Caco-2 (cell line): ENCODE measurements at regions of chr11 and their contacts with region 1.

Region 1: GRCh38 chr11:35373284-35373933 is 45.9 kb downstream of the SLC1A2 start:
- DNase-seq: no peak
- H3K4me3 ChIP-seq: no peak overlapping the region
- H3K4me3 Mint-ChIP-seq: no peak overlapping the region
- H3K27ac Mint-ChIP-seq: no peak overlapping the region
- H3K4me1 ChIP-seq: no peaks in the 10 kb centered on the region
- H3K4me1 Mint-ChIP-seq: peaks cover 6% of the 10 kb centered on the region
- H3K27me3 ChIP-seq: no peaks in the 10 kb centered on the region
- H3K27me3 Mint-ChIP-seq: peaks cover 2% of the 10 kb centered on the region
- CTCF ChIP-seq: no peak

Region 2: DNA sequence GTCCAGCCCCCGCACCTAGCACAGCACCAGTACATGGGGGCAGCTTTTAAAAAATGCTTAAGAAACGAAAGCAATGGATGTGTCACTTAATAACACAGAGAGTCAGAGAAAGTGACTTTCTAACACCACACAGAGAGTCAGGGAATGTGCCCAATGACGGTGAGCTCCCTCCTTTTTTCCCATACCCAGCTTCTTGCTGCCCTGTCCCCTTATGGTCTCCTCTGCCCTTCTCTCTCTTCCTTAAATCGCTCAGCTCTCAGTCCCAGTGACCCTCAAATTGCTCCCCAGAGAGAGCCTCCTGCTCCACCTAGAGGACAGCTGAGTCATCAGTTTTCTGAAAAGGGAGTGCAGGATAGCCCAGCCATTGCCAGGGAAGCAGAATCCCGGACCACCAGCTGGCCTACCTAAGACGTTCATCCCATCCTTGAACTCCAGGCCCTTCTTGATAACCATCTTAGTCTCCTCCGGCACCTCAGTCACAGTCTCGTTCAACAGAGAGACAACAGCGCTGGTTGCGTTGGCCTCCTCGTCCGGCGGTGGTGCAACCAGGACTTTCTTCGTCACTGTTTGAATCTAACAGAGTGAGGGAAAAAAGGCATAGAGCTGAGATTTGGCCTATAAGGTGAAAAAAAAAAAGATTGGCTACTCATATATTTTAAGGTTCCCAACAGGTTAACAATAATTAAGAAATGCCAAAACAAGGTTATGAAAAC is 67.6 kb before region 1 on chr11:
- CTCF ChIA-PET with region 1: no interaction called
- POLR2A ChIA-PET with region 1: no interaction called
- intact Hi-C with region 1: loop called (anchors 5 kb)
- DNase-seq: peak; percentile 53 to 62
- H3K4me3 ChIP-seq: no peak overlapping the region
- H3K4me3 Mint-ChIP-seq: no peak overlapping the region
- H3K27ac Mint-ChIP-seq: peak overlapping the region; percentile 56
- H3K4me1 ChIP-seq: no peaks in the 10 kb centered on the region
- H3K4me1 Mint-ChIP-seq: peaks cover 7% of the 10 kb centered on the region
- H3K27me3 ChIP-seq: no peaks in the 10 kb centered on the region
- H3K27me3 Mint-ChIP-seq: peaks cover 2% of the 10 kb centered on the region
- CTCF ChIP-seq: peak; percentile 68 to 85

Region 3: GRCh38 chr11:35549787-35550186 is 176.4 kb after region 1 on chr11:
- CTCF ChIA-PET with region 1: no interaction called
- POLR2A ChIA-PET with region 1: no interaction called
- intact Hi-C with region 1: no loop called
- DNase-seq: peak; percentile 16 to 41
- H3K4me3 ChIP-seq: no peak overlapping the region
- H3K4me3 Mint-ChIP-seq: no peak overlapping the region
- H3K27ac Mint-ChIP-seq: no peak overlapping the region
- H3K4me1 ChIP-seq: peaks cover 15% of the 10 kb centered on the region
- H3K4me1 Mint-ChIP-seq: peaks cover 14% of the 10 kb centered on the region
- H3K27me3 ChIP-seq: no peaks in the 10 kb centered on the region
- H3K27me3 Mint-ChIP-seq: no peaks in the 10 kb centered on the region
- CTCF ChIP-seq: no peak